Naive thymus-derived CD4-positive, alpha-beta T cell (primary cell): ENCODE measurements at regions of chr1 and their contacts with region 1.

Region 1: DNA sequence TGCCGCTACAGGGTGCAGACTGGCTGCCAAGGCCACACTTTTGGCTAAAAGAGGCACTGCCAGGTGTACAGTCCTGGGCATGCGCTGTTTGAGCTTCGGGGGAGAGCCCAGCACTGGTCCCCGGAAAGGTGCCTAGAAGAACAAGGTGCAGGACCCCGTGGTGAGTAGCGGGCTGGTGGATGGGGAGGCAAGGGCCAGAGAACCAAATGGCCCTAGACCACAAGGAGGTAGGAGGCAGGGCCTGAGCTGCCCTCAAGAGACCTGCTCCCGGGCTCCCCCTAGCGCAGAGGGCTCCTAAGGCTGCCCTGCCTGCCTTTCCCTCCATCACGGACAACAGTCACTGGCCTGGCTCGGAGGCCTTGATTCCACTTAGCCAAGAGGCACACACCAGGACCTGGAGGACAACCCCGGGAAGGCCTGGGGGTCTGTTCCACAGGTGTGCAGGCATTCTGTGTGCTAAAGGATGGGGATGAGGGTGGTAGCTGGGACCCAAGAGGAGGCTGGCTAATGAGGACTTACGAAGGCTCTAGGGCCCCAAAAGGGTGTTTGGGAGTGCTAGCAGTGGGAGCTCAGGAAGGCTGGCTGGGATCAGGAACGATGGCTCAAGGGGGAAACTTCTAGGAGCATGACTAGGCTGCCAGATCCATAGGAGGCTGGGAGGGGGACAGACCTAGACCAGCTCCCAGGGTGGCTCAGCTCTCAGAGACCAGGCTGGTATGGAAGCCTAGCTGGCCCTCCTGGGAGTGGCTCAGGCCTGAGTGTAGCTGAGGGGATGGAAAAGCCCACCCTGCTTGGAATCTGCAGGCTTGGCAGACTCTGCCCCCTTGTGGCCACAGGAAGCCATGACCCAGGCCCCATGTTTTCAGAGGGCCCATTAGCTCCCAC is 742 bp downstream of the ARTN start:
- DNase-seq: peak in 6 of 9 donors; percentile 29 to 68 (median 44)
- ATAC-seq: peak; percentile 82
- H3K4me3 ChIP-seq: no peak overlapping the region
- H3K4me3 Mint-ChIP-seq: peak overlapping the region in 8 of 10 donors; percentile 12 to 70 (median 46)
- H3K27ac ChIP-seq: no peak overlapping the region
- H3K27ac Mint-ChIP-seq: no peak overlapping the region
- H3K4me1 ChIP-seq: peaks cover 0 to 9% of the 10 kb centered on the region in 2 donors
- H3K4me1 Mint-ChIP-seq: peaks cover 10 to 29% (median 14%) of the 10 kb centered on the region in 7 donors
- H3K27me3 ChIP-seq: peaks cover 9 to 19% of the 10 kb centered on the region in 2 donors
- H3K27me3 Mint-ChIP-seq: peaks cover 21 to 29% (median 26%) of the 10 kb centered on the region in 5 donors

Region 2: DNA sequence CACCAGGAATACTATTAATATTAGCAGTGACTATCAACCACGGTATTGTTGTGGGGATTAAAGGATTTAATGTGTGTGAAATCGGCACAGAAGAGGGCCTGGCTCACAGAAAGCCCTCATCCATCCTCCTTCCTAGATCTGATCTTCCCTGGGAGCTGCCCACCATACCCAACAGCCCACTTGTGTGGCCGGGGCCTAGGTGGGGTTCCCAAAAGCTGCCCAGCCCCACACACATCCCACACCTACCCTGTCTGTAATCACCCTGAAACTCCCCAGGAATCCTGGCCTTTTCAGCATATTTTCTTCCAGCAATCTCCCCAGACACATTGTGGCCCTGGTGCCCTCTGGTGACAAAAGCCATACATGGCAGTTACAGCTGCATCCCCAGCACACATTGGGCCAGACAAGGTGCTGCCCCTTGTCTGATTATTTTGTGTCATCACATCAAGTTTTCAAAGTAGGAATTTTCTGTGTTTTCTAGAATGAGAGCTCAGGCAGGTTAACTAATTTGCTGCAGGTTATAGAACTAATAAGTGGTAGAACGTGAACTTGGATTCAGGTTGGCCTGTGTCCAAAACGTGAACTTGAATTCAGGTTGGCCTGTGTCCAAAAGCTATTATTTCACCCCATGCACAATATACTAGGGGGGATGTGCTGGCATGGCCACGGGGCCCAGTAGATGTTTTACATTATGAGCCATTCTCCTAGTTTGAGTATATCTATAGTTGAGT is 102.2 kb after region 1 on chr1:
- CTCF ChIA-PET with region 1: no interaction called
- POLR2A ChIA-PET with region 1: no interaction called
- intact Hi-C with region 1: loop called in 1 of 2 experiments (anchors 2 kb)
- DNase-seq: peak; percentile 32 to 71 (median 58)
- ATAC-seq: peak; percentile 88
- H3K4me3 ChIP-seq: no peak overlapping the region
- H3K4me3 Mint-ChIP-seq: peak overlapping the region in 1 of 10 donors; percentile 1
- H3K27ac ChIP-seq: no peak overlapping the region
- H3K27ac Mint-ChIP-seq: peak overlapping the region in 1 of 9 donors; percentile 18
- H3K4me1 ChIP-seq: no peaks in the 10 kb centered on the region
- H3K4me1 Mint-ChIP-seq: peaks cover 0 to 19% (median 0%) of the 10 kb centered on the region in 7 donors
- H3K27me3 ChIP-seq: no peaks in the 10 kb centered on the region
- H3K27me3 Mint-ChIP-seq: peaks cover 0 to 12% (median 0%) of the 10 kb centered on the region in 5 donors

Region 3: DNA sequence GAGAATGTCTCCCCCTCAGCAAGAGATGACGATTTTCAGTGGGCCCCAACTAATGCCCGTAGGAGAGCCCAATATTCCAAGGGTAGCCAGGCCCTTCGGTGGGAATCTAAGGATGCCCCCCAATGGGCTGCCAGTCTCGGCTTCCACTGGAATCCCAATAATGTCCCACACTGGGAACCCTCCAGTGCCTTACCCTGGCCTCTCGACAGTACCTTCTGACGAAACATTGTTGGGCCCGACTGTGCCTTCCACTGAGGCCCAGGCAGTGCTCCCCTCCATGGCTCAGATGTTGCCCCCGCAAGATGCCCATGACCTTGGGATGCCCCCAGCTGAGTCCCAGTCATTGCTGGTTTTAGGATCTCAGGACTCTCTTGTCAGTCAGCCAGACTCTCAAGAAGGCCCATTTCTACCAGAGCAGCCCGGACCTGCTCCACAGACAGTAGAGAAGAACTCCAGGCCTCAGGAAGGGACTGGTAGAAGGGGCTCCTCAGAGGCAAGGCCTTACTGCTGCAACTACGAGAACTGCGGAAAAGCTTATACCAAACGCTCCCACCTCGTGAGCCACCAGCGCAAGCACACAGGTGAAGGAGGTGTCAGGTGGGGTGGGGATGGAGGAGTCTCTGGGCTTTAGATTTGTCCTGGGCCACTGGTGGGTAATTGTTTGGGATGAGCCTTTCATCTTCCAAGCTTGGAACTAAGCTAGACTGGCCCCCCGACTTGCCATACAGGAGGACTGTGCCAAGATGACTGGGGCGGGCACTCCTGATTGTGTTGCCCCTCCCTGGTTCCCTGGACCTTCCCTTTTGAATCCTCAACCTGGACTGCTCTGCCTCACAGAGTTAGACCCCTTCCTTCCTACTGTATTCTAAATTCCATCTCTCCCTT is 195.5 kb after region 1 on chr1:
- CTCF ChIA-PET with region 1: no interaction called
- POLR2A ChIA-PET with region 1: no interaction called
- intact Hi-C with region 1: no loop called
- DNase-seq: no peak
- ATAC-seq: no peak
- H3K4me3 ChIP-seq: no peak overlapping the region
- H3K4me3 Mint-ChIP-seq: no peak overlapping the region
- H3K27ac ChIP-seq: no peak overlapping the region
- H3K27ac Mint-ChIP-seq: no peak overlapping the region
- H3K4me1 ChIP-seq: no peaks in the 10 kb centered on the region
- H3K4me1 Mint-ChIP-seq: peaks cover 0 to 7% (median 4%) of the 10 kb centered on the region in 7 donors
- H3K27me3 ChIP-seq: no peaks in the 10 kb centered on the region
- H3K27me3 Mint-ChIP-seq: peaks cover 5 to 37% (median 24%) of the 10 kb centered on the region in 5 donors